ENCODE measurements at regions of chrX and their contacts with region 1.

Region 1: DNA sequence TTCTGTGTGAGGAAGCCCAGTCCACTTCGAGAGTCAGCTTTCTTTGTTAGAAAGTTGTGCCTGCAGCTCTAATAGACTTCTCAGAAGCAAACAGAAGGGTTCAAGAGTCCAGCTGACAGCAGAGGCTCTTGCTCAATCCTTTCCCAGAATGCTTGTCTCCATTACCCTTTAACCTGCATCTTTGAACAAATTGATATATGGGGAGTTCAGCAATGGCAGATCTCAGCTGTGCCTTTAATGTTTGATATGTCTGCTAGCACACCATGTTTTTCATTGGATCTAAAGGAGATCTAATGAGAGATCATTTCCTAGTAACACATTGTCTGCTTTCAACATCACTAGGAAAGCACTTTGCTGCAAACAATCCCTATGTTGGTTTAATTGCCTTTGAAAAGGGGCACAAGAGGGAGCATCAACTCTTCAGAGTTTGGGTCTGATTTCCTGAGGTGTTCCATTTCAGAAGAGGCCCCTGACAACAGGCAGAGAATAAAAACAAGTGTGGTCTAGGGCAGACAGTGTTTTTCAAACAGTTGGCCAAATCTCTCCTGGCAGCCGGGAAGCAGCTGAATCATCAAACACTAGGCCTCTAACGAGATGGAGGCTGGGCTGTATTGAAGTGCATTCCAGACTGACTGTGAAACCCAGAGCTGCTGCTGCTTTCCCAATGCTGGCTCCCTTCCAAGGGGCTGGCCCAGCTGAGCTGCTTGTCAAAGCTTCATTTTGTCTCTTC is 55.5 kb downstream of the LUZP4 start:
- DNase-seq: peak; percentile 80 to 88 (median 85)
- ATAC-seq: peak; percentile 95 to 97 (median 96)
- H3K4me3 ChIP-seq: no peak overlapping the region
- H3K27ac ChIP-seq: peak overlapping the region in 11 of 12 donors; percentile 16 to 77 (median 66)
- H3K4me1 ChIP-seq: peaks cover 0 to 19% (median 7%) of the 10 kb centered on the region in 12 donors
- H3K27me3 ChIP-seq: peaks cover 0 to 10% (median 0%) of the 10 kb centered on the region in 9 donors
- CTCF ChIP-seq: no peak
- POLR2A ChIP-seq: no peak

Region 2: GRCh38 chrX:115393271-115393670 is 48.2 kb after region 1 on chrX:
- intact Hi-C with region 1: loop called in 1 of 10 experiments (anchors 10 kb)
- DNase-seq: no peak
- ATAC-seq: peak in 1 of 4 donors; percentile 34
- H3K4me3 ChIP-seq: no peak overlapping the region
- H3K27ac ChIP-seq: no peak overlapping the region
- H3K4me1 ChIP-seq: peaks cover 0 to 4% (median 0%) of the 10 kb centered on the region in 12 donors
- H3K27me3 ChIP-seq: peaks cover 0 to 18% (median 0%) of the 10 kb centered on the region in 9 donors
- CTCF ChIP-seq: no peak
- POLR2A ChIP-seq: no peak

Region 3: GRCh38 chrX:115533485-115533884 is 188.4 kb after region 1 on chrX:
- intact Hi-C with region 1: no loop called
- DNase-seq: no peak
- ATAC-seq: no peak
- H3K4me3 ChIP-seq: no peak overlapping the region
- H3K27ac ChIP-seq: no peak overlapping the region
- H3K4me1 ChIP-seq: peaks cover 0 to 8% (median 0%) of the 10 kb centered on the region in 12 donors
- H3K27me3 ChIP-seq: peaks cover 0 to 16% (median 0%) of the 10 kb centered on the region in 9 donors
- CTCF ChIP-seq: no peak
- POLR2A ChIP-seq: no peak

Measured in heart left ventricle (tissue), 16 donors.